ENCODE measurements at regions of chr12 and their contacts with region 1.

Region 1: DNA sequence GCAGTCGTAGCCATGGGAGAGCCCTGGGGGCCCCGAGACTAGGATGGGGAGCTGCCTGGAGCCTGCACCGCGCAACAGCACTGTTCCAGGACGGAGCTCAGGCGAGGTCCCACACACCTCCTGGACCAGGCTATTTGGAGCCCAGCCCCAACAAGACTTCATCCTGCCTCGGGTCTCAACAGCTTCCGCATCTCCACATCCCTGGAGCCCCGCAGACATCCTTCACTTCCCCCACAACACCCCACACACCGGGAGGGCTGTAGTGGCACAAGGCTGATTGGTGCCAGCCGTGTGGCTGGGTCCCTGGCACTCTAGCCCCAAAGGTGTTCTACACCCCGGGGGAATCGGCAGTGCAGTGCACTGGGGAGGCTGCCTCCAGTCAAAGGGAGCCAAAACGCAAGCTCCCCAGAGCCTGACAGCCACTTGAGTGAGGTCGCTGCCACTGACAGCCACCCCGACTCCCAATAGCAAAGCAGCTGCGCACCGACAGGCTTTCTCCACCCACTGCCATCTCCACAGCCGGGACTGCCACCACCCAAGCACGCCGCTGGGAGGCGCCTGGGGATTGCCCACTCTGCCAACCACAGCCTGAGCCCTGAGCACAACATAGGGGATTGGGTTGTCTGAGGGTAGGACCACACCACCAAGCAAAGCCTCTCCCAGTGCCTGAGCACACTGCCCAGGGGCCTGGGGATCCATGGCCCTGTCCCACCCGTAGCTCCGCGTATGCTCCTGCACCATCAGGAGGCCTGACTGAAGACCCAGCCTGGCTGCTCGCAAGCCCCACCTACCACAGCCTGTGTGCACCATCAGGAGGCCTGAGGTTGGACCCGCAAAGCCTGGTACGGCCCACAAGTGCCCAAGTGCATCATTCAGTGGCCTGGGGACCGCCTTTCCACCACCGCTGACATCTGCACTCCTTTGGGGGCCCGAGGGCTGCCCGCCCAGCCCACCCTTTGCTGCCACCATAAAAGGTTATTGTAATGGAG is 13.2 kb upstream of the KLRF1 start:
- DNase-seq: peak; percentile 95
- ATAC-seq: peak; percentile 98
- H3K4me3 Mint-ChIP-seq: peak overlapping the region; percentile 86
- H3K27ac Mint-ChIP-seq: peak overlapping the region; percentile 84
- H3K4me1 Mint-ChIP-seq: peaks cover 44% of the 10 kb centered on the region
- H3K27me3 Mint-ChIP-seq: peaks cover 4% of the 10 kb centered on the region

Region 2: GRCh38 chr12:9741726-9742125 is 72.4 kb before region 1 on chr12:
- CTCF ChIA-PET with region 1: interaction called, 28 read pairs
- POLR2A ChIA-PET with region 1: no interaction called
- DNase-seq: peak; percentile 92
- ATAC-seq: peak; percentile 79
- H3K4me3 Mint-ChIP-seq: peak overlapping the region; percentile 79
- H3K27ac Mint-ChIP-seq: peak overlapping the region; percentile 96
- H3K4me1 Mint-ChIP-seq: peaks cover 68% of the 10 kb centered on the region
- H3K27me3 Mint-ChIP-seq: no peaks in the 10 kb centered on the region

Region 3: DNA sequence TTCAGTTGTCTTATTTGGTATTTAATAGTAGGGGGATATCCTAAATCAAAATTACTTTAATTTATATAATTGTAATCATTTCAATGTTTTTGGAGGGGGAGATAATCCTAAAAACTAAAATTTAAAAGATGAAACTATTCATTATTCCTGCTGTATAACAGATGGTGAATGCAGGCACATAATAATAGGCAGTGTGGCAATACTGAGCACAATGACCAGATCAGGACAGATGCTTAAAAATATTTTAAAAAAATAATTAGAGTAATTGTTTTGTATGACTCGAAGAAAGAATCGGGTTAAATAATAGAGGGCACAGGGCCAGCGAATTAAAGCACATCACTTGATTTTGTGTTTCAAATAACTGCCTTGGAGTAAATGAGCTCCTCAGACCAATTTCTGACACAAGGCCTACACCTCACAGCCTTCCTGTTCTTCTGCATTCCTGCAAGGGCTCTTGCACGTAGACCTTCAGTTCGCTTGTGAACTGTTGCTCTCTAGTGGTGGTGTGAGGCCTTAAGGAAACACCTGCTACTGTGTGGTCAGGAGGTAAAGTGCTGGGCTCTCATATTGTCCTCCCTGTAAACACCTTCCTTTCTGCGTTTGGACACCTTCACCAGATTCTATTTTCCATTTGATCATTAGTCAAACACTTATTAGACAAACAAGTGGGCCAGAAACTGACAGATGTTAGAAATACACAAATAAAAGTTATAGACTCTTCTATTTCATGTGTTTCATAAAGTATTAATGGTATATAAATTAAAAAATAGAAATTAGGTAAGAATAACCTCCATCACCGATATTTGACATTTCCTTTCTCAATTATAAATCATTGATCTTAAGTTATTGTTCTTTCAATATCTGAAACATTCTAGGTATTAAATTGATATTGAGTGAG is 16.1 kb before region 1 on chr12:
- CTCF ChIA-PET with region 1: interaction called, 95 read pairs
- POLR2A ChIA-PET with region 1: interaction called, 7 read pairs
- DNase-seq: peak; percentile 87
- ATAC-seq: peak; percentile 83
- H3K4me3 Mint-ChIP-seq: no peak overlapping the region
- H3K27ac Mint-ChIP-seq: peak overlapping the region; percentile 64
- H3K4me1 Mint-ChIP-seq: peaks cover 46% of the 10 kb centered on the region
- H3K27me3 Mint-ChIP-seq: peaks cover 4% of the 10 kb centered on the region

Region 4: DNA sequence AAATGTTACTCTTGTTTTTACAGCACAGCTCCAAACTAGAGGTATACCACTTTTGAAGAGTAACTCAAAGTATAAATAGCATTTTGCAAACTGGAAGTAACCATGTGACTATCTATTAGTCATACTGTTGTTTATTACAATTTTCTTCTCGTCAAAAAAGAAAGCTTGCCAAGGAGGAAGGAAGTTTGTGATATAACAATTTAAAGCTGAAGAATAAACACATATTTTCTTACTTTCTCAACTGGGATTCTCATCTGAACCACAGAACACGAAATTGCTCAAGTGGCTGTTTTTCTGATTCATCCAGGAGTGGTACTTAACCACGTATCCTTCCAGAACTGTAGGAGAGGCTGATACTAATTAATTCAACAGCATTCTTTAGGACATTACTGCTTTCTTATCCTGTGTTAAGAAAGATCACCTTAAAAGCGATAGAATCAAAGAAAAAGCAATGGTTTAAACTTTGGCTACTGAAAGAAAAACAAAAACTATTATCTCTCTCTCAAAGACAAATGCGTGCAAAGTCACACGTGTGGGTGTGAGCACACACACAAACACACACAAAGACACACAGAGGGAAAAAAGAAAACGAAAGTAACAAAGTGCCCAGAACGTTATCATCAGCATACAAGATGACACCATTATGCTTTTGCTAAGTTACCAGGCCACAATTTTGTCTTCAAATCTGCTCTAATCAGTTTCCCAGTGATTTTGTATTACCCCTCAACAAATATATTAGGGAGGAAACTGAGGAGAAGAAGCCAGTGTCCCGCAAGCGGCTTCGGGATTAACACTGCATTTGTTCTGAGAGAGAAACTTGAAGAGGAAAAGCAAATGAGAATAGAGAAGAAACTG is 55.4 kb after region 1 on chr12 and contains the start of gene CLEC2B:
- CTCF ChIA-PET with region 1: interaction called, 30 read pairs
- POLR2A ChIA-PET with region 1: interaction called, 13 read pairs
- DNase-seq: peak; percentile 58
- ATAC-seq: peak; percentile 55
- H3K4me3 Mint-ChIP-seq: peak within 1 kb of the TSS; percentile 79
- H3K27ac Mint-ChIP-seq: peak within 1 kb of the TSS; percentile 91
- H3K4me1 Mint-ChIP-seq: peaks cover 22% of the 10 kb centered on the region
- H3K27me3 Mint-ChIP-seq: no peaks in the 10 kb centered on the region
- total RNA-seq, gene CLEC2B: 55.2 to 58.8 TPM

Region 5: DNA sequence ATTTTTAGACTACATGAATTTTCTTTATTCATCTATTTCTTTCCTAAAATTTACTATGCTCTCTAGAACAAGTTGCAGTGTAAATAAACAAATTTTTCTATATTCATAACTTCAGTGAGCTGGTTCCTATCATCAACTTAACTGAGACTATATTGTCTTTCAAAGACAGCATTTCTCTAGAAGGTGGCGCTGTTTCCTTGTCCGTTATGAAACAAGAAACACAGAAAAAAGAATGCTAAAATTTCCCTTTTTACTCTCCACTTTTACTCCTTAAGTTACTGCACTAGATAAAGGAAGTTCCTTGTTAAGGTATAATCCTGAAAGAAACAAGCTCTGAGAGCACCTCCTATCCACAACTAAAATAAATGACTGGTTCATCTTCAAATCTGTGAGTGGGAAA is 126.3 kb after region 1 on chr12:
- CTCF ChIA-PET with region 1: interaction called, 28 read pairs
- POLR2A ChIA-PET with region 1: interaction called, 6 read pairs
- DNase-seq: peak; percentile 48
- ATAC-seq: no peak
- H3K4me3 Mint-ChIP-seq: no peak overlapping the region
- H3K27ac Mint-ChIP-seq: no peak overlapping the region
- H3K4me1 Mint-ChIP-seq: peaks cover 19% of the 10 kb centered on the region
- H3K27me3 Mint-ChIP-seq: peaks cover 13% of the 10 kb centered on the region

Region 6: DNA sequence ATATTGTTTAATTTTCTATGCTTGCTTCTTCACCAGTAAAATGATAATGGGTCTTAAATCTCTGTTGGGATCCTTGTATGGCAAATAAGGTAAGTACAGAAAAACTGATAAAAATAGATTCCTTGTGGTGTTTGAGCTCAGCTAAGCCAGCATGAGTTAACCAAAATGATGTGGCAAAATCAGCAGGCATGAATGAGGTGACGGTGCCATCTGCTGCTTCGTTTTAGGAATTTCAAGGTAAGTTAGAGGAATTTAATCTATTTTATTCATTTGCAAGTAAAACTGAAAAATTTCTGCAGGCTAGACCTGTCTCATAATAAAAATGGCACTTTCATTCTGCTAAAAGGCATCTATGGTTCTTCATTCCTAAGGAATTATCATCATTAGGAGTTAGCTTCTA is 325.9 kb after region 1 on chr12:
- CTCF ChIA-PET with region 1: interaction called, 35 read pairs
- POLR2A ChIA-PET with region 1: interaction called, 3 read pairs
- DNase-seq: peak; percentile 72
- ATAC-seq: peak; percentile 64
- H3K4me3 Mint-ChIP-seq: no peak overlapping the region
- H3K27ac Mint-ChIP-seq: no peak overlapping the region
- H3K4me1 Mint-ChIP-seq: peaks cover 3% of the 10 kb centered on the region
- H3K27me3 Mint-ChIP-seq: peaks cover 16% of the 10 kb centered on the region

Measured in activated CD8-positive, alpha-beta T cell treated with anti-CD3 and anti-CD28 coated beads, Interleukin-2, amount 10 ng/mL, durations not matched to agents 7 days and 5 days (primary cell).